Activated naive CD4-positive, alpha-beta T cell treated with anti-CD3 and anti-CD28 coated beads for 36 hours (primary cell): ENCODE measurements at regions of chr7 and their contacts with region 1.

Region 1: GRCh38 chr7:159197066-159197975 is 52.7 kb upstream of the VIPR2 start:
- DNase-seq: peak; percentile 70
- H3K4me3 Mint-ChIP-seq: peak overlapping the region; percentile 64
- H3K27ac Mint-ChIP-seq: peak overlapping the region; percentile 87
- H3K4me1 Mint-ChIP-seq: peaks cover 28% of the 10 kb centered on the region
- H3K27me3 Mint-ChIP-seq: no peaks in the 10 kb centered on the region

Region 2: GRCh38 chr7:158655931-158656441 is 541.3 kb before region 1 on chr7:
- CTCF ChIA-PET with region 1: no interaction called
- intact Hi-C with region 1: loop called (anchors 1 kb)
- DNase-seq: peak; percentile 90
- H3K4me3 Mint-ChIP-seq: no peak overlapping the region
- H3K27ac Mint-ChIP-seq: peak overlapping the region; percentile 84
- H3K4me1 Mint-ChIP-seq: peaks cover 21% of the 10 kb centered on the region
- H3K27me3 Mint-ChIP-seq: no peaks in the 10 kb centered on the region

Region 3: GRCh38 chr7:159015454-159016410 is 181.6 kb before region 1 on chr7:
- CTCF ChIA-PET with region 1: no interaction called
- intact Hi-C with region 1: loop called (anchors 5 kb)
- DNase-seq: no peak
- H3K4me3 Mint-ChIP-seq: no peak overlapping the region
- H3K27ac Mint-ChIP-seq: no peak overlapping the region
- H3K4me1 Mint-ChIP-seq: peaks cover 26% of the 10 kb centered on the region
- H3K27me3 Mint-ChIP-seq: peaks cover 6% of the 10 kb centered on the region

Region 4: GRCh38 chr7:159049266-159050025 is 147.9 kb before region 1 on chr7:
- CTCF ChIA-PET with region 1: no interaction called
- intact Hi-C with region 1: loop called (anchors 5 kb)
- DNase-seq: no peak
- H3K4me3 Mint-ChIP-seq: no peak overlapping the region
- H3K27ac Mint-ChIP-seq: no peak overlapping the region
- H3K4me1 Mint-ChIP-seq: peaks cover 15% of the 10 kb centered on the region
- H3K27me3 Mint-ChIP-seq: no peaks in the 10 kb centered on the region

Region 5: DNA sequence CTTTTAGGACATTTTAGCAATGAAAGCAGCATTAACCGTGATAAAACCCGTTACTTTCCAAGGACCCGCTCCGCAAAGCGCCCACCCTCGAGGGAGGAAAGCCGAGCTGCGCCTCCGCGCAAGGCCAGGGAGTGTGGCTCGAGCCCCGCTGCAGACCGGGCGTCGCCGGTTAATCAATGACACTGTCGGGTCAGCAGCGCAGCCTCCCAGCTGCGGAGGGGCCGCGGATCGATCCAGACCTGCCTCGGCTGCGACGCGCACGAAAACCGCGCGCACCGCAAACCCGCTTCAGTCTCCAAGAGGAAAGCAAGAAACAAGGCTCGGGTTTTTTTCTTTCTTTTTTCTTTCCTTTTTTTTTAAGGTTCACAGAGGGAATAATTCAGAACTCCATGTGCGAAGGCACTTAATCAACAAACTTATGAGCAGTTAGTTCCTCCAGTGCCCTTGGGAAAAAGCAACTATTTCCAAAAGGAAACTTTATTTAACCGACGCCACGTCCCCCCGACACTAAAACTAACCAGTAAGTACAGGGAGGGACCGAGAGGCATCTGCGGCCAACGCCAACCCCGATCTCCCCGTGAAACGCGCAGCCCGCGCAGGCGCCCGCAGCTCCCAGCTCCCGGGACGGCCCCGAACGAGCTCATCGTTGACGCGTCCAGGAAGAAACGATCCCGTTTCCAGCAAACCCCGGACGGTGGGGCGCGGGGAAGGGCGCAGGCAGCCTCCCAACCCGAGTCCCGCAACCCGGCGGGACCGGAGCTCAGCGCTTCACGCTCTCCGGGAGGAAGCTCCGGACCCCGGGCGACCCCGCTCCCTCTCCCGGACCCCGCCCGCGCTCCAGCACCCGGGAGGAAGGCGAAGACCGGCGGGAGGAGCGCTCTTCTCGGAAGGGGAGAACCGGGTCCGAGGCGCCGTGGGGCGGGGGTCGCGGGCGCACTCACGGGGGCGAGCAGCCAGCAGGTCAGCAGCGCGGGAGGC is 53.3 kb before region 1 on chr7:
- CTCF ChIA-PET with region 1: no interaction called
- intact Hi-C with region 1: loop called (anchors 2 kb)
- DNase-seq: peak; percentile 78
- H3K4me3 Mint-ChIP-seq: peak overlapping the region; percentile 72
- H3K27ac Mint-ChIP-seq: no peak overlapping the region
- H3K4me1 Mint-ChIP-seq: peaks cover 4% of the 10 kb centered on the region
- H3K27me3 Mint-ChIP-seq: peaks cover 46% of the 10 kb centered on the region